H1 (cell line): ENCODE measurements at regions of chr3 and their contacts with region 1.

Region 1: DNA sequence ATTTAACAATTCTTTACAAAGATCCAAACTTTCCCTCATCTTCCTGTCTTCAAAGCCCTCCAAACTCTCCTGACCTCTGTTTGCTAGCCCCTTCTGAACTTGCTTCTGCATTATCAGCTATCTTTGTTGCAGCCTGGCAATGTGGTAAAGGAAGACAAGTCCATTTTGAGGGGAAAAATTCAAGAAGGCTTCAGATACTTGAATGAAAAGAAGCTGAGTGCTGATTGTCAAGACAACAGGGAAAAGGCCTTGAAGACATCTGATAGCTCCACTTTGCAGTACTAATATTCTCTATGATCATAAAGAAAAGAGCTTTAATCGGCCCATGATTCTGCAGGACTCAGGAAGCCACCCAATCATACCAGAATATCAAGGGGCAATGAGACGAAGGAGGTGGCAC is 91.8 kb downstream of the LMLN start:
- DNase-seq: no peak
- H3K4me3 ChIP-seq: no peak overlapping the region
- H3K27ac ChIP-seq: no peak overlapping the region
- H3K4me1 ChIP-seq: no peaks in the 10 kb centered on the region
- H3K27me3 ChIP-seq: no peaks in the 10 kb centered on the region
- CTCF ChIP-seq: no peak
- EP300 ChIP-seq: no peak
- POLR2A ChIP-seq: no peak
- RAD21 ChIP-seq: no peak

Region 2: GRCh38 chr3:197880491-197881269 is 171.2 kb before region 1 on chr3:
- CTCF ChIA-PET with region 1: no interaction called
- POLR2A ChIA-PET with region 1: no interaction called
- DNase-seq: no peak
- H3K4me3 ChIP-seq: peak overlapping the region in 2 of 4 experiments; percentile 19 to 24; a peak in 3 of 8 replicates
- H3K27ac ChIP-seq: no peak overlapping the region
- H3K4me1 ChIP-seq: peaks cover 4 to 14% (median 10%) of the 10 kb centered on the region in 4 experiments; a peak in 6 of 7 replicates
- H3K27me3 ChIP-seq: peaks cover 0 to 5% (median 2%) of the 10 kb centered on the region in 4 experiments; a peak in 2 of 7 replicates
- CTCF ChIP-seq: no peak
- EP300 ChIP-seq: no peak
- POLR2A ChIP-seq: no peak
- RAD21 ChIP-seq: no peak

Region 3: DNA sequence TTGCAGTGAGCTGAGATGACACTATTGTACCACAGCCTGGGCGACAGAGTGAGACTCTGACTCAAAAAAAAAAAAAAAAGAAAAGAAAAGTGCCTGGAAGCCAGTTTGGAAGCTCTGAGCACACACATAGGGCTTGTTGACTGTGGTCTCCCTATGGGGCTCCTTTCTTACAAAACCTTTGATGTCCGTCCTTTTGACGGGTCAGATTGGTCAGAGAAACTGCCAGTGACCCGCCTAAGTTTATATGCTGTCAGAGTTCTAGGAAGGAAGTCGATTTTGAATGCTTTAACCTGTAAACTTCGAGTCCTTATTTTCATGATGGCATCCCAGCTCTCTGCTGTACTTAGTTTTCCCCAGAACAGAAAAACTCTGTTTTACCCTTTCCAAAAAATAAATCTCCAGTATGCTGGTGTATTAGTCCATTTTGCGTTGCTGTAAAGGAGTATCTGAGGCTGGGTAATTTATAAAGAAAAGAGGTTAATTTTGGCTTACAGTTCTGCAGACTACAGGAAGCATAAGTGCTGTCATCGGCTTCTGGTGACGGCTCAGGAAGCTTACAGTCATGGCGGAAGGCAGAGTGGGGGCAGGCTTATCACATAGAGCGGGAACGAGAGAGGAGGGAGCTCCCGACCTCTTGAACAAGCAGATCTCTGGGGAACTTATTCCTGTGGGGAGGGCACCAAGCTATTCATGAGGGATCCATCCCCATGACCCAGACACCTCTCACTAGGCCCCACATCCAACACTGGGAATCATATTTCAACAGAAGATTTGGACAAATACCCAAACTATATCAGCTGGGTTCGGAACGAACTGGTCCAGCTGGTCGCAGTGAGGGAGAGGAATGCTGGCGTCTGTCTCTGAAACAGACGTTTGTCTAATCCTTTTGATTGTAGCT is 19.5 kb before region 1 on chr3:
- CTCF ChIA-PET with region 1: interaction called, 24 read pairs
- POLR2A ChIA-PET with region 1: no interaction called
- DNase-seq: no peak
- H3K4me3 ChIP-seq: no peak overlapping the region
- H3K27ac ChIP-seq: no peak overlapping the region
- H3K4me1 ChIP-seq: no peaks in the 10 kb centered on the region
- H3K27me3 ChIP-seq: no peaks in the 10 kb centered on the region
- CTCF ChIP-seq: no peak
- EP300 ChIP-seq: no peak
- POLR2A ChIP-seq: no peak
- RAD21 ChIP-seq: no peak

Region 4: GRCh38 chr3:198071602-198072285 is 19.9 kb after region 1 on chr3:
- CTCF ChIA-PET with region 1: interaction called, 70 read pairs
- POLR2A ChIA-PET with region 1: no interaction called
- DNase-seq: no peak
- H3K4me3 ChIP-seq: no peak overlapping the region
- H3K27ac ChIP-seq: no peak overlapping the region
- H3K4me1 ChIP-seq: peaks cover 0 to 9% (median 2%) of the 10 kb centered on the region in 4 experiments; a peak in 2 of 7 replicates
- H3K27me3 ChIP-seq: peaks cover 0 to 4% (median 0%) of the 10 kb centered on the region in 4 experiments; a peak in 2 of 7 replicates
- CTCF ChIP-seq: peak in 1 of 3 experiments; percentile 60; a peak in 1 of 4 replicates
- EP300 ChIP-seq: no peak
- POLR2A ChIP-seq: no peak
- RAD21 ChIP-seq: peak; percentile 19 to 20; a peak in 2 of 4 replicates

Region 5: DNA sequence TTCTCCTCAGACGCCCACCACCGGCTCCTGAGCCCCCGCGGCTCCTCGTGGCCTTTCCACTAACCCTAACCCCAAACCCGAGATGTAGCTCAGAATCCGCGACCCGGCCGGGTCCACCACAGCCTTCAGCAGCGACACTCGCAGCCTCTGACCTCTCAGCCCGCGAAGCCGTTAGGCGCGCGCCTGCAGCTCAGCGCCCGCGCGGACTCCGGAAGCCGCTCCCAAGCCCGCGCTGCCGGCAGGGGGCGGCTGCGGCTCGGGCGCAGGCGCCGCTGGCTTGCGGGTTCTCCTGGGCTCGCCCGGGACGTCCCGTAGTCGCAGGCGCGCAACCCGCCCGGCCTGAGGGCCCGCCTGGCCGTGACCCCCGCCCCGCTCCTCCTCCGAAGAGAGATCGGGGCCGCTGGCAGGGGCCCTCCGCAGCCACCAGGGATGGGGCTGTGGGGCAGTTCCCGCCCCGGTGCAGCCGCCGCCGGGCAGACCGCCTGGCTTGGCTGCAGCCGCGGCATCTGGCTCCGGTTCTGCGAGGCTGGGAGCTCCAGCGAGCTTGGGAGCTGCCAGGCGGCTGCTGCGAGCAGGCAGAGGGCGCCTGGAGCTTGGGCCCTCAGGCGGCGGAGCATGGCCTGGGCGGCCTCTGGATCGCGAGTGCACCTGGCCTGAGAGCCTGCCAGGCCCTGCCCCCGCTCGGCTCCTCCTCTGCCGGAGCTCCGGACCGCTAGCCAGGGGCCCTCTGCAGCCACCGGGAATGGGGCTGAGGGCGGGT is 28.9 kb after region 1 on chr3:
- CTCF ChIA-PET with region 1: interaction called, 26 read pairs
- POLR2A ChIA-PET with region 1: interaction called, 4 read pairs
- DNase-seq: peak; percentile 64 to 91
- H3K4me3 ChIP-seq: peak overlapping the region; percentile 26 to 62 (median 44)
- H3K27ac ChIP-seq: no peak overlapping the region
- H3K4me1 ChIP-seq: peaks cover 0 to 7% (median 1%) of the 10 kb centered on the region in 4 experiments; a peak in 3 of 7 replicates
- H3K27me3 ChIP-seq: peaks cover 15 to 60% (median 33%) of the 10 kb centered on the region in 4 experiments
- CTCF ChIP-seq: peak; percentile 56 to 69 (median 63)
- EP300 ChIP-seq: peak in 1 of 2 experiments; percentile 49; a peak in 1 of 3 replicates
- POLR2A ChIP-seq: no peak
- RAD21 ChIP-seq: peak; percentile 6 to 51; a peak in 1 of 4 replicates

Region 6: DNA sequence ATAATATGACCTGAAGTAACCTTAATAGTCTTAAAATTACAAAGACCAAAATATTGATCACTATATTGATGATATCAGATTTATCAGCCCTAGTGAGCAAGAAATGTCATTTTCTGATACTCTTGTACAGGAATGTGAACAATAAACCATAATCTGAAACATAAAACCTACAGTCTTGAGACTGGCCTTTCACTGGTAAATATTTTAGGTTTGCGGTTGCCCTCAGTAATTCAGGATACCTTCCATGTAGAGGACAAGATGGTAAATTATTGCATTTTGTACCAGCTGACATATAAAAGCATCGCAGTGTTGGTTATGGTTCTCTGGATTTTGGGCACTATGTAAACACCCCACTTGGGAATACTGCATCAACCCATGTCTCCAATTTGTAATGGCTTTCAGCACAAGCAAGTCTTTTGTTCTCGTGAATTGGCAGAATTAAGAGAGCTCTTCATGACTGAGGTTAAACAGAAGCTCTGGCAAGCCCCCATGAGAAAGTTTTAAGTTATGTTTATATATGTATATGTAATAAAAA is 36.7 kb after region 1 on chr3:
- CTCF ChIA-PET with region 1: interaction called, 11 read pairs
- POLR2A ChIA-PET with region 1: no interaction called
- DNase-seq: no peak
- H3K4me3 ChIP-seq: no peak overlapping the region
- H3K27ac ChIP-seq: no peak overlapping the region
- H3K4me1 ChIP-seq: no peaks in the 10 kb centered on the region
- H3K27me3 ChIP-seq: peaks cover 1 to 10% (median 6%) of the 10 kb centered on the region in 4 experiments; a peak in 4 of 7 replicates
- CTCF ChIP-seq: no peak
- EP300 ChIP-seq: no peak
- POLR2A ChIP-seq: no peak
- RAD21 ChIP-seq: no peak